Activated B cell treated with CpG ODN at 0.5 μM for 24 hours (primary cell): ENCODE measurements at regions of chr15 and their contacts with region 1.

Region 1: DNA sequence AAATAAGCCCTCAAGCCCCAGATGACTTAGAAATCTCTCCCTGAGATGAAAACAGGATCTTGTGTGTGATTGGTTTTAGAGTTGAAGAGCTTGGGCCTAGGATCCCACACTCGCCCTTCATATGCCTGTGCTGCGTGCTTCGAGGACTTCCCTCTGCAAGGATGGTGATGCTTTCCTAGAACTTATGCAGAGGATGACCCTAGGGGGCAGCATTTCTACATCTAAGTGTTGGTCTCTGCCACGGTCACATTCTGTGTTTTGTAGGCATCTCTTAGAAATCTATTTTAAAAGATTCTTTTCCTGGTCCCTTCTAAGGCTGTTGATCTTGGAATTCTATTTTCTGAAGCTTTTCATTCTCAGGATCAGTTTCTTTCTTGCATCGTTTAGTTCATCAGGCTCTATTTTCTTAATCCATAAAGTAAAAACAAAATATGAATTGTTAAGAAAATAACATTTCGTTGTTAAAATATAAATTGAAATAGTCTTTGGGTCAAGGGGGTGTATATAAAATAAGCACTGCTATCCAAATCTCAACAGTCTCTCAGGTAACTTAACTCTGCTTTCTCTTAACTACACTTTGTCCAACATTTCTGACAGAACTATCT is 45.7 kb downstream of the WDR76 start:
- DNase-seq: no peak
- ATAC-seq: peak; percentile 34
- H3K4me3 Mint-ChIP-seq: no peak overlapping the region
- H3K27ac Mint-ChIP-seq: no peak overlapping the region
- H3K4me1 Mint-ChIP-seq: peaks cover 3% of the 10 kb centered on the region
- H3K27me3 Mint-ChIP-seq: no peaks in the 10 kb centered on the region
- CTCF ChIP-seq: no peak

Region 2: DNA sequence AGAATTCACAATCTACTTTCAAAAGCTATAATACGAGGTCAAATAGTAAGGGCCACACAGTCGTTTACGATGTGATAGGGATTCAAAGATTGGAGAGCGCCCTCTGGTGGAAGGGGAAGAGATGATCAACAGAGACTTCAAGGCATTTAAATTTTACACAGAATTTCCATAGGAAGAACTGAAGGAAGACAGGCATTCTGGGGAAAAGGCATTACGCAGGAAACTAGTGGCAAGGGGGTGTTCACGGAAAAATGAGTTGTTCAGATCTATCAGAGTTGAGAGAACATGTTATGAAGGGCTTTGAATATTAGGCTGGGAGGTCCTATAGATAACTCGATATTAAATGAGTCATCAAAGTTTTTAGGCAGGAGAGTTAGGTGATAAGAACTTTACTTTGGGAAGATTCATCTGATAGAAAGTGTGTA is 193.8 kb after region 1 on chr15:
- CTCF ChIA-PET with region 1: interaction called, 4 read pairs
- POLR2A ChIA-PET with region 1: no interaction called
- intact Hi-C with region 1: loop called (anchors 1 kb)
- DNase-seq: peak; percentile 17
- ATAC-seq: peak; percentile 52
- H3K4me3 Mint-ChIP-seq: no peak overlapping the region
- H3K27ac Mint-ChIP-seq: no peak overlapping the region
- H3K4me1 Mint-ChIP-seq: peaks cover 1% of the 10 kb centered on the region
- H3K27me3 Mint-ChIP-seq: peaks cover 4% of the 10 kb centered on the region
- CTCF ChIP-seq: peak; percentile 30

Region 3: DNA sequence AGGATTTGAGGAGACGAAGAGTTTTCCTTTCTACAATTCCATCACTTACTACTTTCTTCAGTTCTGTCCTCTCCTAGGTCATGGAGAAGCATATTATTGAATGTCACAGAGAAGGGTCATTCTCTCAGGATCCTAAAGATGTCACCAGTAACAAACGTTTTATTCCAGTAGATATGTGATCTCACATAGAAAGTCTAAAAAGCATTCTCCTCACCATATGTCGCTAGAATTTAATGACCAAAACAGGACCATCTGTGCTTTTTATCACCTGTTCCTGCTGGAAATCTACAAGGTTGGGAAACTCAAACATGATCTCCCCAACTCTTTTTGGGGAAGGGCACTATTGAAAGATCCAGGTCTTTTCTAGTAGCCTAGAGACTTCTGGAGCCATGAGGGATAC is 346.6 kb after region 1 on chr15:
- CTCF ChIA-PET with region 1: no interaction called
- POLR2A ChIA-PET with region 1: no interaction called
- intact Hi-C with region 1: loop called (anchors 1 kb)
- DNase-seq: no peak
- ATAC-seq: no peak
- H3K4me3 Mint-ChIP-seq: no peak overlapping the region
- H3K27ac Mint-ChIP-seq: no peak overlapping the region
- H3K4me1 Mint-ChIP-seq: peaks cover 2% of the 10 kb centered on the region
- H3K27me3 Mint-ChIP-seq: peaks cover 15% of the 10 kb centered on the region
- CTCF ChIP-seq: no peak

Region 4: GRCh38 chr15:44763187-44763586 is 890.7 kb after region 1 on chr15:
- CTCF ChIA-PET with region 1: no interaction called
- POLR2A ChIA-PET with region 1: no interaction called
- intact Hi-C with region 1: no loop called
- DNase-seq: no peak
- ATAC-seq: no peak
- H3K4me3 Mint-ChIP-seq: no peak overlapping the region
- H3K27ac Mint-ChIP-seq: no peak overlapping the region
- H3K4me1 Mint-ChIP-seq: no peaks in the 10 kb centered on the region
- H3K27me3 Mint-ChIP-seq: no peaks in the 10 kb centered on the region
- CTCF ChIP-seq: no peak